ENCODE measurements at regions of chr18 and their contacts with region 1.

Region 1: GRCh38 chr18:32018331-32019250 is at the start of gene RNF125:
- DNase-seq: peak; percentile 81
- H3K4me3 Mint-ChIP-seq: peak within 1 kb of the TSS; percentile 99
- H3K27ac Mint-ChIP-seq: peak within 1 kb of the TSS; percentile 93
- H3K4me1 Mint-ChIP-seq: peaks cover 38% of the 10 kb centered on the region
- H3K27me3 Mint-ChIP-seq: no peaks in the 10 kb centered on the region
- total RNA-seq, gene RNF125: 11.4 to 12.0 TPM

Region 2: DNA sequence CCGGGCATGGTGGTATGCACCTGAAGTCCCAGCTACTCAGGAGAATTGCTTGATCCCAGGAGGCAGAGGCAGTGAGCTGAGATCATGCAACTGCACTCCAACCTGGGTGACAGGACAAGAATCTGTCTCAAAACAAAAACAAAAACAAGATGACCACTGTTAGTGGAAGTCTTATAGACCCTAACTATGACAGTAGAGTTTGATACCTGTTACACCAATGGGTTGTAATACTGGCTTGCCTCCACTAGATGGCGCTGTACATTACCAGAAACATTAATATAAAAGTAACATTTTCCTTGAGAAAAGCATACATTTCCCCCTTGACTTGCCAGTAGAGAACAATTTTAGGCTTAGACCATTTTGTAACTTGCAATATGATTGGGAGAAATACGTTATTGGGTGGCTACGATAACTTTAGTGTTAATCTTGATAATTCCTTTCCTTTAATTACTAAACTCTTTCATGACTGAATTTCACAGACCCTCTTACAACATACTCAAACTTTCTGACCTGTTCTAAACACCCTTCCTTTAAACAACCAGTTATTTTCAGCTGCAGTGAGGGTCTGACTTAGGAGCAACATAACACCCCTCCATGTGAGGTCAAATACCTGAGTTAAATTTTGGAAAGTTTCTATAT is 277.4 kb before region 1 on chr18:
- CTCF ChIA-PET with region 1: no interaction called
- intact Hi-C with region 1: no loop called
- DNase-seq: peak; percentile 78
- H3K4me3 Mint-ChIP-seq: no peak overlapping the region
- H3K27ac Mint-ChIP-seq: no peak overlapping the region
- H3K4me1 Mint-ChIP-seq: no peaks in the 10 kb centered on the region
- H3K27me3 Mint-ChIP-seq: no peaks in the 10 kb centered on the region

Region 3: GRCh38 chr18:31920277-31920676 is 98.3 kb before region 1 on chr18:
- CTCF ChIA-PET with region 1: no interaction called
- intact Hi-C with region 1: no loop called
- DNase-seq: no peak
- H3K4me3 Mint-ChIP-seq: no peak overlapping the region
- H3K27ac Mint-ChIP-seq: no peak overlapping the region
- H3K4me1 Mint-ChIP-seq: peaks cover 1% of the 10 kb centered on the region
- H3K27me3 Mint-ChIP-seq: no peaks in the 10 kb centered on the region

Region 4: GRCh38 chr18:32029558-32029957 is 11.0 kb after region 1 on chr18:
- CTCF ChIA-PET with region 1: no interaction called
- intact Hi-C with region 1: loop called (anchors 1 kb)
- DNase-seq: no peak
- H3K4me3 Mint-ChIP-seq: no peak overlapping the region
- H3K27ac Mint-ChIP-seq: no peak overlapping the region
- H3K4me1 Mint-ChIP-seq: peaks cover 55% of the 10 kb centered on the region
- H3K27me3 Mint-ChIP-seq: no peaks in the 10 kb centered on the region

Region 5: GRCh38 chr18:32048507-32049091 is 30.0 kb after region 1 on chr18:
- CTCF ChIA-PET with region 1: interaction called, 8 read pairs
- intact Hi-C with region 1: loop called (anchors 1 kb)
- DNase-seq: peak; percentile 30
- H3K4me3 Mint-ChIP-seq: no peak overlapping the region
- H3K27ac Mint-ChIP-seq: peak overlapping the region; percentile 81
- H3K4me1 Mint-ChIP-seq: peaks cover 23% of the 10 kb centered on the region
- H3K27me3 Mint-ChIP-seq: no peaks in the 10 kb centered on the region

Region 6: GRCh38 chr18:32092422-32093101 is 74.0 kb after region 1 on chr18:
- CTCF ChIA-PET with region 1: interaction called, 3 read pairs
- intact Hi-C with region 1: loop called (anchors 1 kb)
- DNase-seq: peak; percentile 99
- H3K4me3 Mint-ChIP-seq: peak overlapping the region; percentile 97
- H3K27ac Mint-ChIP-seq: peak overlapping the region; percentile 98
- H3K4me1 Mint-ChIP-seq: peaks cover 42% of the 10 kb centered on the region
- H3K27me3 Mint-ChIP-seq: no peaks in the 10 kb centered on the region

Region 7: GRCh38 chr18:32114293-32114942 is 95.8 kb after region 1 on chr18:
- CTCF ChIA-PET with region 1: no interaction called
- intact Hi-C with region 1: no loop called
- DNase-seq: no peak
- H3K4me3 Mint-ChIP-seq: no peak overlapping the region
- H3K27ac Mint-ChIP-seq: no peak overlapping the region
- H3K4me1 Mint-ChIP-seq: peaks cover 38% of the 10 kb centered on the region
- H3K27me3 Mint-ChIP-seq: no peaks in the 10 kb centered on the region

Region 8: DNA sequence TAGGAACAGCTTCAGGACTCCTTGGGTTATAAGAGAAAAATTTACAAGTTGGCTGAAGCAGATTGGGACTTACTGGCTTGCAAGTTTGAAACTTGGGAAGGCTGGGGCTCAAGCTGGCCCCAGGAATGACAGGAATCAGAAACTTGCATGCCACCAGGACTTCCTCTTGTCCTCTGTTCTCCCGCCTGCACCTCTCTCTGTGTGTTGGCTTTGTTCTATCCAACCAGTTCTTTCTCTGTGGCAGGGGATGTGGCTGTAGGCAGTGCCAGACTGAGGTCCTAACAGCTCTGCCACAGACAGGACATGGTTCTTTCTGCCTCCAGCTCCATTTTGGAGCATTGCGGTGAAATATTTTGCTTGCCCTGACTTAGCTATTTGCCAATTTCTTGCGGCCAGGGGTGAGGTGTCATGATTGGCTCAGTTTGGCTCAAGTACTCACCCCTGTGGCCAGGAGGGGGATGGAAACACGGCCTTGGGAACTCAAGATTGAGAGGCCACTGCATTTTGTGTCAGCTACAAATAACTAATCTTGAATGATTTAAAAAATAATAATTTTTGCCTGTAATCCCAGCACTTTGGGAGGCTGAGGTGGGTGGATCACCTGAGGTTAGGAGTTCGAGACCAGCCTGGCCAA is 220.2 kb after region 1 on chr18:
- CTCF ChIA-PET with region 1: no interaction called
- intact Hi-C with region 1: no loop called
- DNase-seq: no peak
- H3K4me3 Mint-ChIP-seq: no peak overlapping the region
- H3K27ac Mint-ChIP-seq: no peak overlapping the region
- H3K4me1 Mint-ChIP-seq: no peaks in the 10 kb centered on the region
- H3K27me3 Mint-ChIP-seq: peaks cover 4% of the 10 kb centered on the region

Region 9: DNA sequence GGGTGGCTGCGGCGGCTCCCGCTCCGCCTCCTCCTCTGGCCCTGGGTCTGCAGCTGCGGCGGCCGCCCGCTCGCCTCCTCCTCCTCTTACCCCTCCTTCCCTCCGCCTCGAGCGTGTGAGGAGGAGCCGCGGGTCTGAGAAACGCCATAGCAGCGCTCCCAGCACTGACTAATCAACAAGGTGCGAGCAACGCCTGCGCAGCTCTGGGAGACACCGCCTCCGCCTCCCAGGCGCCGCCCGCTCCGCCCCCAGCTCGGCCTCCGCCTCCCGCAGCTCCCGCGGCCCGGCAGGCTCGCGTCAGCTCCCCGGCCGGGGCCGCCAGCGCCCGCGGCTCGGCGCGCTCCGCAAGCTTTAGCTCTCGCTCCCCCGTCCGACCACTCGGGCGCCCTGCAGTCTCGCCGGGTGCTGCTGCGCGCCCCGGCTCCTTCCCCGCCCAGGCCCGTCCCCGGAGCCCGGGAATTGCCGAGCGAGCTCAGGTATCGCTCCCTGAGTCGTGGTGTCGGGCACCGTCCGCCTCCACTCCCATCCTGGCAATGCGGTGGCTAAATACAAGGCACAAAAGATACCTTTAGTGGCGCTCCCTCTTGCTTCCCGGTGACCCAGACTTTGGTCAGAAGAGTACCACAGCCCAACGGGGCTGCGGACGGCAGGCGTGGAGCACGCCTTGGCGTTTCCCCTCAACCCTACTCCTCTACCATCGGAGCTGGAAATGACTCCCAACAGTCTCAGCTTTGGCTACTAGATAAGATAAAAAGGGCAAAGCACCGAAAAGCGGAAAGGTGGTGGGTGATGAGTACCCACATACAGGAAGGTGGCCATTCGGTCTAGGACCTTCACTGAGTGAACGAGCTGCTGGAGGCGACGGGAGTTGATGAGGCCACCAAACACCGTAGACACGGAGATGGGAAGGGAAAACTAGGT is 452.4 kb after region 1 on chr18 and contains the start of gene GAREM1:
- CTCF ChIA-PET with region 1: no interaction called
- intact Hi-C with region 1: loop called (anchors 1 kb)
- DNase-seq: peak; percentile 91
- H3K4me3 Mint-ChIP-seq: peak within 1 kb of the TSS; percentile 77
- H3K27ac Mint-ChIP-seq: no peak within 1 kb of the TSS
- H3K4me1 Mint-ChIP-seq: peaks cover 28% of the 10 kb centered on the region
- H3K27me3 Mint-ChIP-seq: peaks cover 36% of the 10 kb centered on the region
- total RNA-seq, gene GAREM1: 0.31 to 0.35 TPM

Measured in activated naive CD4-positive, alpha-beta T cell treated with anti-CD3 and anti-CD28 coated beads for 36 hours (primary cell).